Common myeloid progenitor, CD34-positive (primary cell): ENCODE measurements at regions of chr20 and their contacts with region 1.

Region 1: DNA sequence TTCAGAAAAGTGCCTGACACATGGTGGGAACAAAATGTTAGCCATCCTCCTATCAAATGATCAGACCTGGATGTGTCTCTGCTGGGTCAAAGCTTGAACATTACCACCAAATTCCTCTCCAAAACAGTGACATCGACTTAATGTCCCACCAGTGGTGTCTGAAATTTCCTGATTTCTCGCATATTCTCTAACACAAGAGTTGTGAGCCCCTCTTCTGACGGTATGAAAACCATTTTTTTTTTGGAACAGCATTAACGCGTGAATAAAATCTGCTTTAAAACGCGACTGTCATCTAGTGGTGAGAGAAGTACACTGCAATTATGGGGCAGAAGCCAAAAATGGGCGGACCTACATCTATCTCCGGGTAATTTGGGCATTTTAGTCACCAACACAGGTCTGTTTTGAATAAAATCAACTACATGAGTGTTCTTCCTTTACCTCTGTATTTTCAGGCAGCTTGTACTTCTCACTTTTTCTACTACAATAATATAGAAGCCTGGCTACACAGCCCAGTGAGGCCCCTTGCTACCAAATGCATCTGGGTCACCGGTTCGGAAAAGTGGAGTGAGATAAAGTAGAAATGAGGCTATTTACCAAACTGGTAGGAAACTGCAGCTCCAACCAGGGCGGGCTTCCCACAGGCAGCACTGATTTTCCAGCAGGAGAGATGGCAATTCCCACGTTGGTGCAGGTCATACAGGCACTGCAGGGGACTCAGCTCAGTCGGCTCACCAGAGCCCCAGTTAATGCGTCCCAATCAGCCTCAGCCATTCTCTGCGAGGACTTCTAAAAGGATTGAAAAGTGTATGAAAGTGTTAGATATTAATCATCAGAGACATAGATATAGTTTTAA is 27.4 kb downstream of the MGME1 start:
- DNase-seq: peak; percentile 72 to 85 (median 80)
- H3K4me3 ChIP-seq: peak overlapping the region in 1 of 7 experiments; percentile 7
- H3K27ac ChIP-seq: no peak overlapping the region
- H3K4me1 ChIP-seq: peaks cover 5 to 21% (median 11%) of the 10 kb centered on the region in 4 experiments
- H3K27me3 ChIP-seq: no peaks in the 10 kb centered on the region

Region 2: GRCh38 chr20:17925141-17925939 is 70.9 kb before region 1 on chr20:
- CTCF ChIA-PET with region 1: no interaction called
- POLR2A ChIA-PET with region 1: no interaction called
- DNase-seq: peak in 2 of 3 donors; percentile 12 to 19
- H3K4me3 ChIP-seq: no peak overlapping the region
- H3K27ac ChIP-seq: no peak overlapping the region
- H3K4me1 ChIP-seq: no peaks in the 10 kb centered on the region
- H3K27me3 ChIP-seq: peaks cover 0 to 2% (median 0%) of the 10 kb centered on the region in 5 experiments

Region 3: DNA sequence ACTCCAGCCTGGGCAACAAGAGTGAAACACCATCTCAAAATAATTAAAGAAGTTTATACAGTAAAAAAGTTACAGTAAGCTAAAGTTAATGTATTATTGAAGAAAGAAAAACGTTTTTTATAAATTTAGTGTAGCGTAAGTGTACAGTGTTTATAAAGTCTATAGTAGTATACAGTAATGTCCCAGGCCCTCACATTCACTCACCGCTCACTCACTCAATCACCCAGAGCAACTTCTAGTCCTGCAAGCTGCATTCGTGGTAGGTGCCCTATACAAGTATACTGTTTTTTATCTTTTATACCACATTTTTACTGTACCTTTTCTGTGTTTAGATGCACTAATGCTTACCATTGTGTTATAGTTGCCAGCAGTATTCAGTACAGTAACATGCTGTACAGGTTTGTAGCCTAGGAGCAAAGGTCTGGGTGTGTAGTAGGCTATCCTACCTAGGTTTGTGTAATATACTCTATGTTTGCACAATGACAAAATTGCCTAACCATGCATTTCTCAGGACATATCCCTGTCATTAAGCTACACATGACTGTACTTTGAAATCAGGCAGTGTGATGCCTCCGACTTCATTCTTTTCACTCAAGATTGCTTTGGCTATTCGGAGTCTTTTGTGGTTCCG is 10.7 kb before region 1 on chr20:
- CTCF ChIA-PET with region 1: interaction called, 27 read pairs
- POLR2A ChIA-PET with region 1: no interaction called
- DNase-seq: no peak
- H3K4me3 ChIP-seq: no peak overlapping the region
- H3K27ac ChIP-seq: no peak overlapping the region
- H3K4me1 ChIP-seq: no peaks in the 10 kb centered on the region
- H3K27me3 ChIP-seq: no peaks in the 10 kb centered on the region

Region 4: GRCh38 chr20:18024606-18025127 is 28.5 kb after region 1 on chr20:
- CTCF ChIA-PET with region 1: no interaction called
- POLR2A ChIA-PET with region 1: no interaction called
- DNase-seq: no peak
- H3K4me3 ChIP-seq: no peak overlapping the region
- H3K27ac ChIP-seq: no peak overlapping the region
- H3K4me1 ChIP-seq: no peaks in the 10 kb centered on the region
- H3K27me3 ChIP-seq: peaks cover 0 to 2% (median 0%) of the 10 kb centered on the region in 5 experiments

Region 5: GRCh38 chr20:18137412-18138265 is 141.4 kb after region 1 on chr20 and contains the starts of genes KAT14 and PET117:
- CTCF ChIA-PET with region 1: no interaction called
- POLR2A ChIA-PET with region 1: no interaction called
- DNase-seq: peak; percentile 95 to 98 (median 98)
- H3K4me3 ChIP-seq: peak within 1 kb of the TSS; percentile 69 to 93 (median 88)
- H3K27ac ChIP-seq: peak within 1 kb of the TSS; percentile 75 to 86
- H3K4me1 ChIP-seq: peaks cover 11 to 30% (median 20%) of the 10 kb centered on the region in 4 experiments
- H3K27me3 ChIP-seq: no peaks in the 10 kb centered on the region

Region 6: DNA sequence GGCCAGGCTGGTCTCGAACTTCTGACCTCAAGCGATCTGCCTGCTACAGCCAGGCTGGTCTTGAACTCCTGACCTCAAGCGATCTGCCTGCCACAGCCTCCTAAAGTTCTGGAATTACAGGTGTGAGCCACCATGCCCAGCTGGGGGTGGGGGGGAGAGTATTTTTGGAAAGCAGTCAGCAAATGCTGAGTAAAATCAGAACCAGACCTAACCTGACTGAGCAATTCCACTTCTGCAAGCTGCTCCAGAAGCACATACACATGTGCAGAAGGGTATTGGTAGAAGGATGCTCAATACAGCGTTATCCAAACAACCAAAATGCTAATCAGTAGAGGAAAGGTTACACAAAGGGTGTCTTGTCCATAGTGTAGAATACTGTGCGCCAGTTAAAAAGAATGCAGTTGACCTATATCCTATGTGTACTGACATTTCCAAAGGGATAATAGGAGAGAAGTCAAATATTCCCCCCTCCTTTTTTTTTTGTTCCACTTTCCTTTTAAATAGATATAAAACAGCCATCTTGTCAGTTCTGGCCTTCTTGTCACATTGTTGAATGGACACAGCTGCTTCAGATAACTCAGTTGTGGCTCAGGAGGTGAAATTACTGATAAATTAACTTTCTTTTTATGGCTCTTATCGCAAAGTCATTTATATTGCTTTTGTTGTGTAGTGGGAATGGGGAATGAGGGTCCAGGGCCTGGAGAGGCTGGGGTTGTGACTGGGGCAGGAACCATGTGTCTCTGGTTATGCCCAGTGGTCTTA is 666.3 kb after region 1 on chr20:
- CTCF ChIA-PET with region 1: no interaction called
- POLR2A ChIA-PET with region 1: no interaction called
- DNase-seq: no peak
- H3K4me3 ChIP-seq: no peak overlapping the region
- H3K27ac ChIP-seq: no peak overlapping the region
- H3K4me1 ChIP-seq: no peaks in the 10 kb centered on the region
- H3K27me3 ChIP-seq: no peaks in the 10 kb centered on the region